Caco-2 (cell line): ENCODE measurements at regions of chr2 and their contacts with region 1.

Region 1: GRCh38 chr2:17373741-17374140 is 144.5 kb downstream of the RAD51AP2 start:
- DNase-seq: no peak
- H3K4me3 ChIP-seq: no peak overlapping the region
- H3K4me3 Mint-ChIP-seq: no peak overlapping the region
- H3K27ac Mint-ChIP-seq: no peak overlapping the region
- H3K4me1 ChIP-seq: no peaks in the 10 kb centered on the region
- H3K4me1 Mint-ChIP-seq: no peaks in the 10 kb centered on the region
- H3K27me3 ChIP-seq: no peaks in the 10 kb centered on the region
- H3K27me3 Mint-ChIP-seq: peaks cover 3% of the 10 kb centered on the region
- CTCF ChIP-seq: no peak

Region 2: GRCh38 chr2:17171446-17172049 is 202.2 kb before region 1 on chr2:
- CTCF ChIA-PET with region 1: no interaction called
- POLR2A ChIA-PET with region 1: no interaction called
- intact Hi-C with region 1: loop called (anchors 10 kb)
- DNase-seq: peak; percentile 58 to 64
- H3K4me3 ChIP-seq: no peak overlapping the region
- H3K4me3 Mint-ChIP-seq: no peak overlapping the region
- H3K27ac Mint-ChIP-seq: no peak overlapping the region
- H3K4me1 ChIP-seq: no peaks in the 10 kb centered on the region
- H3K4me1 Mint-ChIP-seq: no peaks in the 10 kb centered on the region
- H3K27me3 ChIP-seq: no peaks in the 10 kb centered on the region
- H3K27me3 Mint-ChIP-seq: peaks cover 12% of the 10 kb centered on the region
- CTCF ChIP-seq: peak; percentile 67 to 73

Region 3: DNA sequence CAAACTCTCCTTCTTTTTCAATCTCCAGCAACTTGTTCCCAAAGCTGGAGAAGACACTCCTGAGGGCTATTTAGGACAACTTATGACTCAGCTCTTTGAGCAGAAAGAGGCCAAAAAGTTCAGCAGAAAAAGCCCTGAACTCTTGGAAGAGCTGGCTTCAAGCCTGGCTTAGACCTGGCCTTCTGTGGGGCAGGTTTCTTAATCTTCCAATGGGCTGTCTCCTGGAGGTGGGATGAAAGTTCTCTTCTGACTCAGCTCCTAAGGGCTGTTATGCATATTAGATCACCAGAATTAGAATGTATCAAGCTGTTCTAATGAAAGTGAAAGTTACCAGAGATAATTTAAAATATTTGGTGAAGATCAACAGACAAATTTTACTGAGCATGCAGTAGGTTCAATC is 15.1 kb after region 1 on chr2:
- CTCF ChIA-PET with region 1: no interaction called
- POLR2A ChIA-PET with region 1: no interaction called
- intact Hi-C with region 1: no loop called
- DNase-seq: no peak
- H3K4me3 ChIP-seq: no peak overlapping the region
- H3K4me3 Mint-ChIP-seq: no peak overlapping the region
- H3K27ac Mint-ChIP-seq: no peak overlapping the region
- H3K4me1 ChIP-seq: no peaks in the 10 kb centered on the region
- H3K4me1 Mint-ChIP-seq: no peaks in the 10 kb centered on the region
- H3K27me3 ChIP-seq: no peaks in the 10 kb centered on the region
- H3K27me3 Mint-ChIP-seq: peaks cover 3% of the 10 kb centered on the region
- CTCF ChIP-seq: no peak